CD8-positive, alpha-beta T cell (primary cell): ENCODE measurements at regions of chr1 and their contacts with region 1.

Region 1: DNA sequence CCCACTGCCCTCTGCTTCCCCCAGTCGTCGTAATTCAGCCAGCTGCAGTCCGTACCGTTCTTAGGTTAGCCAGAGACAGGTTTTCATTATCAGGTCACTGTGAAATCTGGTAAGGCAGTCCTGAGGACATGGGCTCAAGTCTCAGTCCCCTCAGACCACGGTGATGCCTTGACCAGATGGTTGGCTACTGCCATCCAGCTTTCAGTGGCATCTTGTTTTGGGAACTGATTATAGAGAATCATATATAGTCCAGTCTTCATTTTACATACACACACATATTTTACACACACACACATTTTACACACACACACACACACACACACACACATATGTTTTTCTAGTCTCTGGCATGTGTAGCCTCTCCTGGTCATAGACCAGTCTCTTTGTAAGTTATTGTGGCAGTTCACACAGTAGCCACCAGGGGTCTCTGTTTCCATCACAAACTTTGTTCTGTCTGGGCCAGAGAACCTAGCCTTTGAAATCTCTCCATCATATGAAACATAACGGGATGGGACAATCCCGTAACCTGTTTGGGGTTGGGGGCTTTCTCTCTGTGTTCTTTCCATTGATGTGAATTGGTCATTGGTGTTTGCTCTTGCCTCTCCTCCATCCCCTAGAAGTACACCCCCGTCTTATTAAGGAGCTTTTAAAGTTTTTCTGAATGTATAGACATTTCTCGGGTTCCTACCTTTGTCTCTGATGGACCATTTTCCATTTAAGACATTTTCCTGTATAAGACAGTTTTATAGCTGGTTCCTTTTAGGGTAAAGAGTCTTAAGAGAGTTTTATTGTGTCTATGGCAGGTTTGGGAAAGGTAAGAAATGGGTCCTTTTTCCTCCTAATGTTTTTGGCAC is 8.4 kb upstream of the IKBKE start:
- DNase-seq: peak; percentile 54 to 82 (median 74)
- ATAC-seq: peak; percentile 95
- H3K4me3 ChIP-seq: no peak overlapping the region
- H3K4me3 Mint-ChIP-seq: no peak overlapping the region
- H3K27ac ChIP-seq: no peak overlapping the region
- H3K27ac Mint-ChIP-seq: no peak overlapping the region
- H3K4me1 ChIP-seq: peaks cover 10% of the 10 kb centered on the region
- H3K4me1 Mint-ChIP-seq: peaks cover 19% of the 10 kb centered on the region
- H3K27me3 ChIP-seq: no peaks in the 10 kb centered on the region
- H3K27me3 Mint-ChIP-seq: no peaks in the 10 kb centered on the region
- CTCF ChIP-seq: peak; percentile 75

Region 2: DNA sequence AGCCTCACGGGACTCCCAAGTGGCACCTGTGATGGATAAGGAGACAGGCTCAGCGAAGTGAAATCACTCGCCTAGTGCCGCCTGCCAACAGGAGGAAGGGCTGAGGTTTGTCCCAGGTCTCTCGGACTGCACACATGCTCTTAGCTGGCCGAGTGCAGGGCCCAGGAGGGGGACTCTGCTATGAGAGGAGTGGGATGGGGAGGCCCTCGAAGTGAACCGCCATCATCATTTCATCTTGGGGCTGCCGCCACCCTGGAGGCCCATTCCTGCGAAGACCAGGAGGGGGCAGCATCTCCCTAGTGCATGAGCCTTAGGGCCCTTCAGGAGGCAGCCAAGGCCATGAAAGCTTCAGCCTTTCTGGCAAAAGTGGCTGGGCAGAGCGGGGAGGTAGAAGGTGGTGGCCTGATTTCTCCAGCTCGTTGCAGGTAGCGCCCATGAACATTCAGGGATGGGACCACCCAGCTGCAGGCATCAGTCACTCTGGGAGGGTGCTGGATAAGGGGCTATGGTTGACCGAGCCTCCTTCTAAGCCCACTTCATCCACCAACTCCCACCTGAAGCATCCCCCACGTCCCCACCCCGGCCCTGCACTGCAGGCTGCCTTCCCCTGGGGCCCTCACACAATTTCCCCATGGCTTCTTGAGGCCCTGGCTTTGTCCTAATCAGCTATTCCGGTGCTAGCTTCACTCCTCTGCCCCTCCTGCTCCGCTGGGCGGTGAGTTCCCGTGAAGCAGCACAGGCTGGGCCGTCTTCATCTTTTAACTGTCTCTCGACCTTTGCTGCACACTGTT is 28.3 kb after region 1 on chr1:
- CTCF ChIA-PET with region 1: interaction called, 15 read pairs
- POLR2A ChIA-PET with region 1: no interaction called
- intact Hi-C with region 1: no loop called
- DNase-seq: peak; percentile 47 to 76 (median 71)
- ATAC-seq: peak; percentile 91
- H3K4me3 ChIP-seq: no peak overlapping the region
- H3K4me3 Mint-ChIP-seq: no peak overlapping the region
- H3K27ac ChIP-seq: no peak overlapping the region
- H3K27ac Mint-ChIP-seq: peak overlapping the region; percentile 18
- H3K4me1 ChIP-seq: no peaks in the 10 kb centered on the region
- H3K4me1 Mint-ChIP-seq: no peaks in the 10 kb centered on the region
- H3K27me3 ChIP-seq: no peaks in the 10 kb centered on the region
- H3K27me3 Mint-ChIP-seq: no peaks in the 10 kb centered on the region
- CTCF ChIP-seq: peak; percentile 67

Region 3: DNA sequence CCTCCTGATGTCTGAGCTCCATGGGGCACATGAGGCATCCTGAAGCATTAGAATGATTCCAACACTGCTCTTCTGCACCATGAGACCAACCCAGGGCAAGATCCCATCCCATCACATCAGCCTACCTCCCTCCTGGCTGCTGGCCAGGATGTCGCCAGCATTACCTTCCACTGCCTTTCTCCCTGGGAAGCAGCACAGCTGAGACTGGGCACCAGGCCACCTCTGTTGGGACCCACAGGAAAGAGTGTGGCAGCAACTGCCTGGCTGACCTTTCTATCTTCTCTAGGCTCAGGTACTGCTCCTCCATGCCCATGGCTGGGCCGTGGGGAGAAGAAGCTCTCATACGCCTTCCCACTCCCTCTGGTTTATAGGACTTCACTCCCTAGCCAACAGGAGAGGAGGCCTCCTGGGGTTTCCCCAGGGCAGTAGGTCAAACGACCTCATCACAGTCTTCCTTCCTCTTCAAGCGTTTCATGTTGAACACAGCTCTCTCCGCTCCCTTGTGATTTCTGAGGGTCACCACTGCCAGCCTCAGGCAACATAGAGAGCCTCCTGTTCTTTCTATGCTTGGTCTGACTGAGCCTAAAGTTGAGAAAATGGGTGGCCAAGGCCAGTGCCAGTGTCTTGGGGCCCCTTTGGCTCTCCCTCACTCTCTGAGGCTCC is 34.4 kb after region 1 on chr1:
- CTCF ChIA-PET with region 1: interaction called, 15 read pairs
- POLR2A ChIA-PET with region 1: no interaction called
- intact Hi-C with region 1: no loop called
- DNase-seq: no peak
- ATAC-seq: no peak
- H3K4me3 ChIP-seq: no peak overlapping the region
- H3K4me3 Mint-ChIP-seq: no peak overlapping the region
- H3K27ac ChIP-seq: no peak overlapping the region
- H3K27ac Mint-ChIP-seq: peak overlapping the region; percentile 74
- H3K4me1 ChIP-seq: no peaks in the 10 kb centered on the region
- H3K4me1 Mint-ChIP-seq: no peaks in the 10 kb centered on the region
- H3K27me3 ChIP-seq: no peaks in the 10 kb centered on the region
- H3K27me3 Mint-ChIP-seq: no peaks in the 10 kb centered on the region
- CTCF ChIP-seq: no peak

Region 4: GRCh38 chr1:206590025-206590758 is 128.4 kb after region 1 on chr1:
- CTCF ChIA-PET with region 1: interaction called, 13 read pairs
- POLR2A ChIA-PET with region 1: no interaction called
- intact Hi-C with region 1: no loop called
- DNase-seq: peak in 6 of 9 experiments; percentile 50 to 78 (median 59)
- ATAC-seq: peak; percentile 87
- H3K4me3 ChIP-seq: no peak overlapping the region
- H3K4me3 Mint-ChIP-seq: peak overlapping the region; percentile 16
- H3K27ac ChIP-seq: peak overlapping the region in 1 of 2 experiments; percentile 44
- H3K27ac Mint-ChIP-seq: peak overlapping the region; percentile 91
- H3K4me1 ChIP-seq: peaks cover 20% of the 10 kb centered on the region
- H3K4me1 Mint-ChIP-seq: peaks cover 46% of the 10 kb centered on the region
- H3K27me3 ChIP-seq: no peaks in the 10 kb centered on the region
- H3K27me3 Mint-ChIP-seq: no peaks in the 10 kb centered on the region
- CTCF ChIP-seq: peak; percentile 50